SK-MEL-5 (cell line): ENCODE measurements at regions of chr17 and their contacts with region 1.

Region 1: GRCh38 chr17:12118617-12119016 is 97.9 kb downstream of the MAP2K4 start:
- DNase-seq: no peak

Region 2: DNA sequence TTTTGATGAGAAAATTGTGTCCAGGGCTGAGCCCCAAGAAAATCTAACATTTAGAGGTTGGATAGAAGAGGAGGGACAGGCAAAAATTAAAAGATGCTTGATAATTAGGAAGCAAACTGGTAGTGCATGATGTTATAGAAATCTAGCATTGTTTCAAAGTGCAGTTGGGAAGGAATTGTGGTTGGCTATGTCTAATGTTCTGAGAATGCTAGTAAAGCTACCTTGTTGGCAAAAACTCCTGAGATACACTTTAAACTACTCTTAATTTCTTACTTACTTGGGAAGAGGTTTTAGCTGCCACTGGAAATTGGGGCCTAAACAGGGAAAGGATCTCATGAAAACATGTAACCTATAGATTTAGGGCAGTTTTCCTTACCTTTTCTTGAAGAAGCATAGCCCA is 49.7 kb before region 1 on chr17:
- in situ Hi-C with region 1: loop called (anchors 10 kb)
- DNase-seq: no peak